Motor neuron (in vitro differentiated cells): ENCODE measurements at regions of chr16 and their contacts with region 1.

Region 1: GRCh38 chr16:84504420-84505248 is at the start of gene MEAK7:
- ATAC-seq: peak; percentile 91 to 97 (median 94)
- H3K4me3 ChIP-seq: peak within 1 kb of the TSS; percentile 75 to 95 (median 83)
- H3K27ac ChIP-seq: peak within 1 kb of the TSS; percentile 70 to 76
- H3K4me1 ChIP-seq: peaks cover 23 to 30% of the 10 kb centered on the region in 2 donors
- total RNA-seq, gene MEAK7: 6.5 to 18.9 (median 16.1) TPM

Region 2: GRCh38 chr16:84138824-84139627 is 365.6 kb before region 1 on chr16:
- in situ Hi-C with region 1: no loop called
- ATAC-seq: peak; percentile 73 to 93 (median 86)
- H3K4me3 ChIP-seq: peak overlapping the region in 2 of 5 donors; percentile 7 to 8
- H3K27ac ChIP-seq: peak overlapping the region; percentile 77 to 78
- H3K4me1 ChIP-seq: peaks cover 20 to 29% of the 10 kb centered on the region in 2 donors

Region 3: DNA sequence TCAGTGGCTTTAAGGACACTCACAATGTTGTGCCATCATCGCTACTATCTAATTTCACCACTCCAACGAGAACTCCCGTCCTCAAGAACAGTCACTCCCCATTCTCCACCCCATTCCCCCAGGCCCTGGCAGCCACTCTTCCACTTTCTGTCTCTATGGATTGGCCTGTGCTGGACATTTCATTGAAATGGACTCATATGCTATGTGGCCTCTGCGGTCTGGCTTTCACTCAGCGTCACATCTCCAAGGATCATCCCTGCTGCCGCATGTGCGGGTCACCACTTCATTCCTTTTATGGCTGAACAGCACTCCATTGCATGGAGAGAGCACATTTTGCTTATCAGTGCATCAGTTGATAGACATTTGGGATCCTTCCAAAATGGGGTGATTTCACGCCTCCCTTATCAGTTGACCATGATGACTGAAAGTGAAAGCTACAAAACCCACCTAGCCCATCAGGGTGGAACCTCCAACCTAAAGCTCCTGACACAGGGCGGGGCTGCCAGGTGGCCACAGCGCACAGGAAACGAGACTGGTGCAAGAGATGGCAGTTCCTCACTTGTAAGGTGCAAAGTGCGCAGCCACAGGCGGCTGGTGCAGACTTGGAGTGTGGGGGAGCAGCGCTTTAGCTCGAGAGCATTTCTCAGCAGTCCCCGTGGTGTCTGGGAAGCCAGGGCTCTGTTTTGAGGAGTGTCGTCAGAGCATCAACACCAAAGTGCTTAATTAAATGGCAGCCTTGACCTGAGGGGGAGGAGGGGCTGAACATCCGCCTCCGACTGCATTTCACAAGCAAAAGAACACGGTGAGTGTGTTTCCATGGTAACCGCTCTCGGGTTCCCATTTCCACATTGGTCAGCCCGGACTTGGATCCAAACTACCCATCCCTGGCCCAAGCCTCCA is 89.4 kb after region 1 on chr16:
- in situ Hi-C with region 1: no loop called
- ATAC-seq: peak in 5 of 8 experiments; percentile 83 to 91 (median 86)
- H3K4me3 ChIP-seq: peak overlapping the region in 1 of 5 donors; percentile 9
- H3K27ac ChIP-seq: peak overlapping the region; percentile 59 to 60
- H3K4me1 ChIP-seq: peaks cover 41 to 48% of the 10 kb centered on the region in 2 donors

Region 4: DNA sequence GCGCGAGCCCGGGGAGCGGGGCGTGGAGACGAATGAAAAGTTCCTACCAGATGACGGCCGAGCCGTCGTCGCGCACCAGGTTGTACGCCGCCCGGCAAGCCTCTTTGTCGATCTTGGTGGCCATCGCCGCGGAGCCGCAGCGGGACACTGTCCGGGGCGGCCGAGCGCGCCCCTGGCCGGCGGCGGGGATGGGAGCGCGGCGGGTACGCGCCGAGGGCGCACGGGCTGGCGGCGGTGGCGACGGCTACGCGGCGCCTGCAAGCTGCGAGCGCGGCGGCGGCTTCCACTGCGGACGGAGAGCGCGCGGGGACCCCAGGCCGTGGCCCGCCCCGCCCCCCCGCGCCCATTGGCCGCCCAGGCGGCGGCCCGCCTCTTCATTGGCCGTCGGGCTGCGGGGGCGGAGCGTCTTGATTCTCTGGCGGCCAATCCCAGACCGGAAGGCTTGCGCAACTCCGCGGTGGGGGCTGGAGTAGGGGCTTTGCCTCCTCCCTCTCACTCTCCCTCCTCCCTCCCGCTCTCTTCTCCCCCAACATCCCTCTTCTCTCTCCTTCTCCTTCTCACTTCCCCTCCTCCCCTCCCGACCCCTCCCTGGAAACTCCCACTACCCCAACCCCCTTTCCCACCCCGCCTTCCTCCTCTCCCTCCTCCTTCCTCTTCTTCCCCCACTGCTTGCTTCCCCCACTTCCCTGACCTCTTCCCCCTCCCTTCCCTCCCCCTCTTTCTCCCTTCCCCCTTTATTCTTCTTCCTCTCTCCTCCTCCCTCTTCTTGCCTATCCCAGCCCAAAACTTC is 113.4 kb after region 1 on chr16 and contains the start of gene COTL1:
- in situ Hi-C with region 1: loop called in 6 of 9 experiments (anchors 25 kb)
- ATAC-seq: peak; percentile 75 to 93 (median 82)
- H3K4me3 ChIP-seq: peak within 1 kb of the TSS; percentile 68 to 97 (median 76)
- H3K27ac ChIP-seq: peak within 1 kb of the TSS; percentile 65 to 89
- H3K4me1 ChIP-seq: peaks cover 32 to 38% of the 10 kb centered on the region in 2 donors
- total RNA-seq, gene COTL1: 9.3 to 710 (median 111) TPM

Region 5: DNA sequence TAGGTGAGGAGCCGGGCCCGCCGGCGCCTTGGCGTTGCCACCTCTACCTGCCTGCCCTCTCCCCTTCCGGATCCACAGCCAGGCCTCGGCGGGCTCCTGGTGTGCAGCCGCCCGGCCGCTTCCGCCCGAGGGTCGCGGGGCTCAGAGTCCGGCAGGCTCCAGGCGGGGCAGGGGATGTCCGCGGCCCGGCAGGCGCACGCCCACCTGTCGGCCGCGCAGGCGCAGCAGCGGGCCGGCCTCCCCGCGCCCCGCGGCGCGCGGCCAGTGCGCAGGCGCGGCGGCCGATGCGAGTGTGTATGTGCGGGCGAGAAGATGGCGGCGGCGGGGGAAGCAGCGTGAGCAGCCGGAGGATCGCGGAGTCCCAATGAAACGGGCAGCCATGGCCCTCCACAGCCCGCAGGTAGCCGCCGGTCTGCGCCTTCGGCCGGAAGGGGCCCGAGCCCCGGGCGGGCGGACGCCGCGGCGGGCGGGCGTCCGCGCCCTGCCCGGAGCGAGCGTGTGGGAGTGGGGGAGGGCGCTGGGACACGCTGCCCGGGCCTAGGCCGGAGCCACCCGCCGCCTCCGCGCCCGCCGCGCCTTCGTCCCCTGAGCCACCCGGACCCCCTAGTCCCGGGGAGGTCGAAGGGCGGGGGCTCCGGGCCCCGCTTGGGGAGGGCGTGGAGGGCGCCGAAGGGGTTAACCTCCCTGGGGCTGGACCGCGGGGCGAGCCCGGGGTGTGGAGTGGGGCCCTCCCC is 195.2 kb after region 1 on chr16 and contains the start of gene USP10:
- in situ Hi-C with region 1: loop called in 3 of 9 experiments (anchors 25 kb)
- ATAC-seq: peak; percentile 81 to 93 (median 90)
- H3K4me3 ChIP-seq: peak within 1 kb of the TSS; percentile 63 to 96 (median 91)
- H3K27ac ChIP-seq: peak within 1 kb of the TSS; percentile 89 to 95
- H3K4me1 ChIP-seq: peaks cover 23 to 35% of the 10 kb centered on the region in 2 donors
- total RNA-seq, gene USP10: 42.0 to 102 (median 76.2) TPM

Region 6: GRCh38 chr16:84738255-84739038 is 233.8 kb after region 1 on chr16:
- in situ Hi-C with region 1: loop called in 2 of 9 experiments (anchors 25 kb)
- ATAC-seq: peak; percentile 4 to 92 (median 46)
- H3K4me3 ChIP-seq: no peak overlapping the region
- H3K27ac ChIP-seq: no peak overlapping the region
- H3K4me1 ChIP-seq: peaks cover 30 to 33% of the 10 kb centered on the region in 2 donors

Region 7: GRCh38 chr16:84806256-84806889 is 301.7 kb after region 1 on chr16:
- in situ Hi-C with region 1: no loop called
- ATAC-seq: peak in 3 of 8 experiments; percentile 92 to 95 (median 92)
- H3K4me3 ChIP-seq: no peak overlapping the region
- H3K27ac ChIP-seq: no peak overlapping the region
- H3K4me1 ChIP-seq: no peaks in the 10 kb centered on the region

Region 8: GRCh38 chr16:84952335-84953189 is 447.9 kb after region 1 on chr16:
- in situ Hi-C with region 1: loop called in 3 of 9 experiments (anchors 25 kb)
- ATAC-seq: peak; percentile 86 to 99 (median 90)
- H3K4me3 ChIP-seq: no peak overlapping the region
- H3K27ac ChIP-seq: peak overlapping the region in 1 of 2 donors; percentile 48
- H3K4me1 ChIP-seq: peaks cover 11 to 14% of the 10 kb centered on the region in 2 donors